IMR-90 (cell line): ENCODE measurements at regions of chr9 and their contacts with region 1.

Region 1: GRCh38 chr9:37293664-37294524 is 128.6 kb upstream of the GRHPR start:
- DNase-seq: peak; percentile 32
- ATAC-seq: peak; percentile 27; the same call in 1 of the 2 replicates
- H3K4me3 ChIP-seq: no peak overlapping the region
- H3K27ac ChIP-seq: no peak overlapping the region
- H3K4me1 ChIP-seq: peaks cover 3% of the 10 kb centered on the region
- H3K27me3 ChIP-seq: no peaks in the 10 kb centered on the region
- CTCF ChIP-seq: no peak
- POLR2A ChIP-seq: no peak
- RAD21 ChIP-seq: no peak

Region 2: DNA sequence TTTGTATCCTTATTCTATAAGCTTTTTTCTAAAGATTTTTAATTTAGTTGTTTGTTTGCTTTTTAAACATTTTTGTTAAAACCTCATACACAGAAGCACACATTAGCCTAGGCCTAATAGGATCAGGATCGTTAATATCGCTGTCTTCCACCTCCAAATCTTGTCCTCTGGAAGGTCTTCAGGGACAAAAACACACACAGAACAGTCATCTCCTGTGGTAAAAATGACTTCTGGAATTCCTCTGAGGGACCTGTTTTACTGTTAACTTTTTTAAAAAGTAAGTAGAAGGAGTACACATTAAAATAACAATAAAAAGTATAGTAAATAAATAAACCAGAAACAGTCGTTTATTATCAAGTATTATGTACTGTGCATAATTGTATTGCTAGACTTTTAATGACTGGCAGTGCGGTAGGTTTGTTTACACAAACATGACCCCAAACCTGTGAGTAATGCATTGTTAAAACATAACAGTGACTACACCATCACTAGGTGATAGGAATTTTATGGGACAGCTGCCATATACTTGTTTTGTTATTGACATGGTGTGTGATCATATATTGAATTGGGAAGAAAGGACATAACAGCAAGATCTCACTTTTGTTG is 63.9 kb before region 1 on chr9:
- CTCF ChIA-PET with region 1: no interaction called
- POLR2A ChIA-PET with region 1: no interaction called
- dilution Hi-C with region 1: no loop called
- in situ Hi-C with region 1: no loop called
- intact Hi-C with region 1: loop called (anchors 10 kb)
- DNase-seq: peak; percentile 54
- ATAC-seq: no peak; the same call in 1 of the 2 replicates
- H3K4me3 ChIP-seq: no peak overlapping the region
- H3K27ac ChIP-seq: no peak overlapping the region
- H3K4me1 ChIP-seq: no peaks in the 10 kb centered on the region
- H3K27me3 ChIP-seq: no peaks in the 10 kb centered on the region
- CTCF ChIP-seq: no peak
- POLR2A ChIP-seq: no peak
- RAD21 ChIP-seq: no peak

Region 3: GRCh38 chr9:37251452-37251851 is 42.4 kb before region 1 on chr9:
- CTCF ChIA-PET with region 1: no interaction called
- POLR2A ChIA-PET with region 1: no interaction called
- dilution Hi-C with region 1: no loop called
- in situ Hi-C with region 1: no loop called
- intact Hi-C with region 1: no loop called
- DNase-seq: no peak
- ATAC-seq: no peak
- H3K4me3 ChIP-seq: no peak overlapping the region
- H3K27ac ChIP-seq: no peak overlapping the region
- H3K4me1 ChIP-seq: no peaks in the 10 kb centered on the region
- H3K27me3 ChIP-seq: no peaks in the 10 kb centered on the region
- CTCF ChIP-seq: no peak
- POLR2A ChIP-seq: no peak
- RAD21 ChIP-seq: no peak

Region 4: GRCh38 chr9:37283730-37284325 is 10.1 kb before region 1 on chr9:
- CTCF ChIA-PET with region 1: no interaction called
- POLR2A ChIA-PET with region 1: no interaction called
- dilution Hi-C with region 1: no loop called
- in situ Hi-C with region 1: no loop called
- intact Hi-C with region 1: loop called (anchors 1 kb)
- DNase-seq: peak; percentile 87
- ATAC-seq: peak; percentile 95
- H3K4me3 ChIP-seq: no peak overlapping the region
- H3K27ac ChIP-seq: peak overlapping the region; percentile 55; the same call in 1 of the 2 replicates
- H3K4me1 ChIP-seq: peaks cover 3% of the 10 kb centered on the region
- H3K27me3 ChIP-seq: no peaks in the 10 kb centered on the region
- CTCF ChIP-seq: no peak
- POLR2A ChIP-seq: no peak
- RAD21 ChIP-seq: no peak

Region 5: DNA sequence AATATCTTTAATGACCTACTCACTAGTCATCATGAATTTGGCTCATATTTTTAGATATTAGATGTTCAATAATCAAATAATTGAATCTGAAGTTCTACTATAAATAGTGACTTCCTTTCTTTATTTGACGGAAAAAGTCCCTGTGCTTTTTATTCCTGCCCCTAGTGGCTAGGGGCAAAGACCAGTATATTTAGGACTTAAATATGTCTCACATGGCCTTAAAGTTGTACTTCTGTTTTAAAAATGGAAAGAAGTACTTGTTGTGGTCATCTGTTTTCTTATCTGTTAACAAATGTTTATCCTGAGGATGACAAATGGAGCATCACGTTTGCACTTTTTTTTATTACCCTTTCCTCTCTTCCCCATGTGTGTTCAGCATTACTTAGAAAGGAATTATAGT is 39.4 kb after region 1 on chr9:
- CTCF ChIA-PET with region 1: no interaction called
- POLR2A ChIA-PET with region 1: no interaction called
- dilution Hi-C with region 1: no loop called
- in situ Hi-C with region 1: no loop called
- intact Hi-C with region 1: no loop called
- DNase-seq: no peak
- ATAC-seq: no peak
- H3K4me3 ChIP-seq: no peak overlapping the region
- H3K27ac ChIP-seq: no peak overlapping the region
- H3K4me1 ChIP-seq: no peaks in the 10 kb centered on the region
- H3K27me3 ChIP-seq: no peaks in the 10 kb centered on the region
- CTCF ChIP-seq: no peak
- POLR2A ChIP-seq: no peak
- RAD21 ChIP-seq: no peak